ENCODE measurements at regions of chr5 and their contacts with region 1.

Region 1: DNA sequence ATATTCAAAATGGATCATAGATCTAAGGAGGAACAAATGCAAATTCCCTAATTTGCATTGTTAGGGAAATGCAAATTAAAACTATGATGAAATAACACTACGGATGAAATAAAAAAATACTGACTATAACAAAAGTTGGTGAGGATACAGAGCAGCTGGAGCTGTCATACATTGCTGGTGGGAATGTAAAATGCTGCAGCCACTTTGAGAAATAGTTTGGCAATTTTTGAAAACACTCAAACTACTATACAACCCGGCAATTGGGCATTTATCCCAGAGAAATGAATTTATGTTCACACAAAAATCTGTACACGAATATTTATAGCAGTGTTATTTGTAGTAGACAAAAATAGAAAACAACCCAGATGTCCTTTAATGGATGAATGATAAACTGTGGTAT is 22.5 kb downstream of the C5orf47 start:
- DNase-seq: no peak
- H3K27ac ChIP-seq: no peak overlapping the region
- CTCF ChIP-seq: no peak

Region 2: DNA sequence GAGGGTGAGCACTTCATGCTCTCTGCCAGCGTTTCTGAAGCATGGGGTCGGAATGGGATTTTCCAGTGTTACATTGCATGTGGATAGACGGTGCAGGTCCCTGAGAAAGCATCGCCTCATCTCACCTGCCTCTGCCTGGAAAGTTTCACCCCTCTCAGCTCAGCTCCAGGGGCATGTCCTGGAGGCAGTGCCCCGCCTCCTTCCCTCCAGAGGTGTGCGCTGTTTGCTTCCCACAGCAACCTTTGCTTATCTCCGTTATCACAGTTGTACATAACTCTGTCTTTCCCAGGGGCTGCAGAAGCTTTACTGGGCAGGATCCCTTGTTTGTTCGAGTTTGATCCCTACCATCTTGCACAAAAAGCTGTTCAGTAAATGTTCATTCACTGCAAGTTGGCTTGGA is 966.0 kb before region 1 on chr5:
- CTCF ChIA-PET with region 1: interaction called, 11 read pairs
- POLR2A ChIA-PET with region 1: no interaction called
- DNase-seq: no peak
- H3K27ac ChIP-seq: no peak overlapping the region
- CTCF ChIP-seq: no peak

Region 3: GRCh38 chr5:174030289-174030688 is 18.8 kb after region 1 on chr5:
- CTCF ChIA-PET with region 1: no interaction called
- POLR2A ChIA-PET with region 1: no interaction called
- DNase-seq: no peak
- H3K27ac ChIP-seq: no peak overlapping the region
- CTCF ChIP-seq: no peak

Region 4: DNA sequence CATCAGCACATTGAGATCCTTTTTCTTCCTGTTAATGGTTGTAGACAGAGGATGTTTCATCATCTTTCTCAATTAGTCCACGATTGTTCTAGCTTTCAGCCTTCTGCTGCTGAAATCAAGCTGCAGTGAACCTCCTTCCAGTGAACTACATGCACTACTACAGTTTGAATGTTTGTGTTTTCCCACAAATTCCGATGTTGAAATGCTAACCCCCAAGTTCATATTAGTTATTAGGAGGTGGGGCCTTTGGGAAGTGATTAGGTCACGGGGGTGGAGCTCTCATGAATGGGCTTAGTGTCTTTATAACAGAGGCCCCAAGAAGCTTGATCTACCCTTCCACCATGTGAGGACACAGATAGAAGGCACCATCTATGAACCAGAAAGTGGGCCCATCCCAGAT is 67.0 kb after region 1 on chr5:
- CTCF ChIA-PET with region 1: no interaction called
- POLR2A ChIA-PET with region 1: no interaction called
- DNase-seq: no peak
- H3K27ac ChIP-seq: no peak overlapping the region
- CTCF ChIP-seq: no peak

Measured in RWPE1 (cell line).